AG04450 (cell line): ENCODE measurements at regions of chr14 and their contacts with region 1.

Region 1: GRCh38 chr14:29868000-29868399 is 59.6 kb downstream of the PRKD1 start:
- DNase-seq: peak; percentile 4
- H3K4me3 ChIP-seq: no peak overlapping the region
- H3K27ac ChIP-seq: no peak overlapping the region
- H3K27me3 ChIP-seq: no peaks in the 10 kb centered on the region
- CTCF ChIP-seq: no peak

Region 2: GRCh38 chr14:29927376-29928116 is 59.5 kb after region 1 on chr14 and contains the start of gene PRKD1:
- CTCF ChIA-PET with region 1: interaction called, 12 read pairs
- POLR2A ChIA-PET with region 1: no interaction called
- DNase-seq: no peak
- H3K4me3 ChIP-seq: peak within 1 kb of the TSS; percentile 88
- H3K27ac ChIP-seq: peak within 1 kb of the TSS; percentile 21
- H3K27me3 ChIP-seq: no peaks in the 10 kb centered on the region
- CTCF ChIP-seq: no peak
- polyA plus RNA-seq, gene PRKD1: 20.7 and 24.5 TPM in 2 replicates